HCT116 (cell line): ENCODE measurements at regions of chr11 and their contacts with region 1.

Region 1: DNA sequence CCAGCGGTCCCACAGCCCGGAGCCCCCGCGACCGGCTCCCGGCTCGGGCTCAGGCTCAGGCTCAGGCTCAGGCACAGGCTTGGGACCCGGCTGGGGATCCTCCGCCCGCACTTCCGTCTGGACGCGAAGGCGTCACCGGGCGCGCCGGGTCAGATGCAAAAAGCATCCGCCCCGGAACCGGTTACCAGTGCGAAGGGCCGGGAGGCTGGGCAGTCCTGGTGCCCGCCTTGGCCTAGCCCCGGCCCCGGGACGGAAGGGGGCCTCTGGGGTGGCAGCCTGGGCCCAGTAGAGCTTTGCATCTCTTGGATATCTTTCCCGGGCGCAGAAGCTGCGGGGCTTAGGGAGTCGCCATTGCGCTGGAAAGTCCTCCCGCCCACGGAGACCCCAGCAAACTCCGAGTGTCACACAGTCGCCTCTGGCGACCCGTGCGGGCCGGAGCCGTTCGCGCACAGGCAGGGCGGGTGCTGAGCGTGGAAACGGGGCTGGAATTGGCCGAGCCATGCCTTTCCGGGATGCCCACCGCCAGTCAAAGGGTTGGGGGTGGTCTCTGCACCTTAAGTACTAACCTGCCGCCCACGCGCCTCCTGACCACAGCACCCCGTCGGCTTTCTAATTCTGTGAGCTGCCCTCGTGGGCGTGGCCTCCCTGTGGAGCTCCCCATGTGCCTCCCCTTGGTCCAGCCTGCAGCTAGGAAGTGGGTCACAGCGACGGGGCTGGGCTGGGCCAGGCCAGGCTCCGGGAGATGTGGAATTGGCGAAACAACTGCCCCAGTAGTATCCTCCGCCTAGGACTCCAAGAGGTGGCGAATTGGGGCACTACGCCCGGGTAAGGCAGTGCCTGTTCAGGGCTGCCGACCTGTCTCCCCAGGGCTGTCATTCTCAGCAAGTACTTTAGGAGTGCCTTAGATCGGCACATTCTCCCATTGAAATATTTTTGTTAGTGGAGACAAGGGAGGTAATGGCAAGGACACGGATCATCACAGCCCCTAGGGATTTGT is at the start of gene TMEM9B:
- DNase-seq: peak; percentile 78
- ATAC-seq: peak; percentile 86
- H3K4me3 ChIP-seq: peak within 1 kb of the TSS; percentile 85 to 88
- H3K27ac ChIP-seq: peak within 1 kb of the TSS; percentile 97
- H3K4me1 ChIP-seq: peaks cover 10 to 25% of the 10 kb centered on the region in 2 experiments
- H3K27me3 ChIP-seq: no peaks in the 10 kb centered on the region
- CTCF ChIP-seq: no peak
- POLR2A ChIP-seq: peak; percentile 66
- RAD21 ChIP-seq: no peak
- total RNA-seq, gene TMEM9B: 26.8 TPM

Region 2: GRCh38 chr11:8225589-8226036 is 739.0 kb before region 1 on chr11:
- CTCF ChIA-PET with region 1: no interaction called
- POLR2A ChIA-PET with region 1: no interaction called
- RAD21 ChIA-PET with region 1: no interaction called
- intact Hi-C with region 1: loop called (anchors 10 kb)
- DNase-seq: peak; percentile 42
- ATAC-seq: peak; percentile 88
- H3K4me3 ChIP-seq: no peak overlapping the region
- H3K27ac ChIP-seq: no peak overlapping the region
- H3K4me1 ChIP-seq: peaks cover 0 to 3% of the 10 kb centered on the region in 2 experiments; a peak in 1 of 4 replicates
- H3K27me3 ChIP-seq: no peaks in the 10 kb centered on the region
- CTCF ChIP-seq: peak; percentile 89 to 95 (median 92)
- POLR2A ChIP-seq: no peak
- RAD21 ChIP-seq: peak; percentile 96

Region 3: GRCh38 chr11:8911029-8911826 is 53.4 kb before region 1 on chr11 and contains the start of gene AKIP1:
- CTCF ChIA-PET with region 1: interaction called, 28 read pairs
- POLR2A ChIA-PET with region 1: interaction called, 3 read pairs
- RAD21 ChIA-PET with region 1: interaction called in 1 of 2 experiments, 3 read pairs
- intact Hi-C with region 1: loop called (anchors 1 kb)
- DNase-seq: peak; percentile 83
- ATAC-seq: peak; percentile 95
- H3K4me3 ChIP-seq: peak within 1 kb of the TSS; percentile 86 to 91
- H3K27ac ChIP-seq: peak within 1 kb of the TSS; percentile 74
- H3K4me1 ChIP-seq: peaks cover 3 to 14% of the 10 kb centered on the region in 2 experiments
- H3K27me3 ChIP-seq: no peaks in the 10 kb centered on the region
- CTCF ChIP-seq: no peak
- POLR2A ChIP-seq: peak; percentile 30
- RAD21 ChIP-seq: no peak
- total RNA-seq, gene AKIP1: 30.3 TPM

Region 4: DNA sequence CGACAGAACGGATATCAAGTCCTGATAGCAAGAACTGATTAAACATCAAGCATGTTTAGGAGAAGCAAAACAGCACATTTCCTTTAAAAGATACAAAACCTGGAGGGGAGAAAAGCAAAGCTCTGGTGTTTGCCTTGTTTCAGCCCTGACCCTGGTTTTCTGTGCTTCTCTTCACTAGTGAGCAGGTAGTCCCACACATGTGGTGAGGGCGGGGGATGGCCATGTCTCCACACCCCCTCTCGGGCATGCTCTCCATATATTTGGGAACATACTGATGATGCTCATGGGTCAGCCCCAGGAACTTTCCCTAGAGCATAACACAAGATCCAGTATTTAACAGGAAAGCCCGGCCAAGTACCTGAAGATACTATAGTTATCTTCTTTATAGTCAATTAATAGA is 41.9 kb before region 1 on chr11:
- CTCF ChIA-PET with region 1: no interaction called
- POLR2A ChIA-PET with region 1: no interaction called
- RAD21 ChIA-PET with region 1: no interaction called
- intact Hi-C with region 1: no loop called
- DNase-seq: no peak
- ATAC-seq: no peak
- H3K4me3 ChIP-seq: no peak overlapping the region
- H3K27ac ChIP-seq: no peak overlapping the region
- H3K4me1 ChIP-seq: peaks cover 0 to under 1% of the 10 kb centered on the region in 2 experiments; a peak in 1 of 4 replicates
- H3K27me3 ChIP-seq: no peaks in the 10 kb centered on the region
- CTCF ChIP-seq: no peak
- POLR2A ChIP-seq: no peak
- RAD21 ChIP-seq: no peak

Region 5: GRCh38 chr11:8948886-8949285 is 15.7 kb before region 1 on chr11:
- CTCF ChIA-PET with region 1: interaction called, 14 read pairs
- POLR2A ChIA-PET with region 1: interaction called, 3 read pairs
- RAD21 ChIA-PET with region 1: no interaction called
- intact Hi-C with region 1: no loop called
- DNase-seq: no peak
- ATAC-seq: no peak
- H3K4me3 ChIP-seq: no peak overlapping the region
- H3K27ac ChIP-seq: no peak overlapping the region
- H3K4me1 ChIP-seq: no peaks in the 10 kb centered on the region
- H3K27me3 ChIP-seq: no peaks in the 10 kb centered on the region
- CTCF ChIP-seq: no peak
- POLR2A ChIP-seq: no peak
- RAD21 ChIP-seq: no peak

Region 6: GRCh38 chr11:9495803-9496514 is 531.3 kb after region 1 on chr11:
- CTCF ChIA-PET with region 1: no interaction called
- POLR2A ChIA-PET with region 1: no interaction called
- RAD21 ChIA-PET with region 1: no interaction called
- intact Hi-C with region 1: no loop called
- DNase-seq: no peak
- ATAC-seq: no peak
- H3K4me3 ChIP-seq: no peak overlapping the region
- H3K27ac ChIP-seq: no peak overlapping the region
- H3K4me1 ChIP-seq: no peaks in the 10 kb centered on the region
- H3K27me3 ChIP-seq: no peaks in the 10 kb centered on the region
- CTCF ChIP-seq: no peak
- POLR2A ChIP-seq: no peak
- RAD21 ChIP-seq: no peak

Region 7: DNA sequence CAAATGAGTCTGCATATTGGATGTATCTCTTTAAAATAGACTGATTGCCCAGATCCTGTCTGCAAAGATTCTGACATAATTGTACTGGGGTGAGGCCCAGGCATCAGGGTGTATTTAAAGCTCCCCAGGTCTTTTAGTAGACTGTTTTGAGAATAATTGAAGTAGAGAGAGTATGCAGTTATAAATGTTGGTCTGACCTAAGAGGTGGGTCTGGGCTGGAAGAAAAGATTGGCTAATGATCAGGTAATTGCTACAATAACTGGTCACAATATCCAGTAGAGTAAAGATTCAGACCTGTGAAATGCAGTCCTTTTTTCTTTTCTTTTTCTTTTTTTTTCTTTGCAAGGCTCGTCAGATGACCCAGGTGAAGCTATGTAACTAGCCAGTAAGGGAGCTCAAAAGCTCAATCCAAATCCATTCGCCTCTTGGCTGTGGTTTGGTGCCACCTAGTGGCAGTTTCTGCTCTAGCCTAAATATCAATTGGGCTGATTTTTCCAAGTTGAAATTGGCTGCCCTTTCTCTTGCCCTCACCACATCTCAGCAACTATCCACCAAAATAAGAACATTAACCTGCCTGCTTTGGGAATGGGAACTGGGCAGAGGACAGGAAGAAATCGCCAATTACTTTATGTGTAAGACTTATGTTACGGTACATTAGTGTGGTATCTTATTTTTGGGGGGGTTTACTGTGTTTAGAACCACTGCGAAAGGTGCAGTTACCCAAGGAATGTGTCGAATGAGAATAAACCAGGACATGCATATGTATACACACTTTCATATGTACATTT is 542.1 kb after region 1 on chr11:
- CTCF ChIA-PET with region 1: interaction called, 13 read pairs
- POLR2A ChIA-PET with region 1: no interaction called
- RAD21 ChIA-PET with region 1: no interaction called
- intact Hi-C with region 1: no loop called
- DNase-seq: peak; percentile 75
- ATAC-seq: peak; percentile 94
- H3K4me3 ChIP-seq: no peak overlapping the region
- H3K27ac ChIP-seq: no peak overlapping the region
- H3K4me1 ChIP-seq: peaks cover 0 to 5% of the 10 kb centered on the region in 2 experiments; a peak in 1 of 4 replicates
- H3K27me3 ChIP-seq: no peaks in the 10 kb centered on the region
- CTCF ChIP-seq: peak; percentile 83 to 94 (median 88)
- POLR2A ChIP-seq: no peak
- RAD21 ChIP-seq: peak; percentile 96